ENCODE measurements at regions of chr11 and their contacts with region 1.

Region 1: DNA sequence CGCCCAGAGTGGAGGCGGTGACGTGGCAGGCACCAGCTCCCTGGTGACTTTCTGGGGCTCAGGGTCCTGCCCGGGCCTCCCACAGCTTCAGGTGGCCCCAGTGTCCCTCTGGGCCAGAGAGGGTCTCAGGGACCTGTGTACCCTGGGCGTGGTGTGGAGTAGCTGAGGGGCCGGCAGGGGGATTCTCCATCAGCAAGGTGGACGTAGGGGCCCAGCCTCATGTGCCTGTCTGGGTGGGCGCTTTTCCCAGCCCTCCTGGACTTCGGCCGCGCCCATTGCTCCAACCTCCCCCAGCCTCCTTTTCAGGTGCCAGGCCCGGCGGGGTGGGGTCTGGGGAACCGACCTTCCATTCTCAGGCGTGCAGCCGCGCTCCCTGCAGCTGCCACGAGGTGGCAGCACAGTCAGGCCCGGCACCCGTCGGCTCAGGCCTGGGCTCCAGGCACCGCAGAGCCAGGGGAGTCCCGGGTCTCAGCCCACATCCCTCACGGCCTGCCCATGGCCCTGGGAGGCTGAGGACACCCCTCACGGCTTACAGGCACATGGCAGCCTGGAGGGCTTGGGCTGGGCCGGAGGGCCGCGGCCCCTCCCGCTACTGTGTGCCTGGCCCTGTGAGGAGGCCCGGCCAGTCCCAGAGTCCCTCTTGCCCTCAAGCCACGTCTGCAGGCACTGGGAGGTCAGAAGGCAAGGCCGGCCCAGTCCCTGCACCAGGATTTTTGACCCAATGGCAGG is 19.9 kb upstream of the MUC5B start:
- DNase-seq: peak; percentile 72
- H3K4me3 ChIP-seq: no peak overlapping the region
- H3K27ac ChIP-seq: no peak overlapping the region
- H3K4me1 ChIP-seq: peaks cover 12% of the 10 kb centered on the region
- H3K27me3 ChIP-seq: peaks cover 13% of the 10 kb centered on the region
- CTCF ChIP-seq: peak; percentile 93

Region 2: GRCh38 chr11:1233331-1233715 is 30.4 kb after region 1 on chr11:
- intact Hi-C with region 1: loop called (anchors 1 kb)
- DNase-seq: peak; percentile 73
- H3K4me3 ChIP-seq: no peak overlapping the region
- H3K27ac ChIP-seq: peak overlapping the region; percentile 50
- H3K4me1 ChIP-seq: peaks cover 15% of the 10 kb centered on the region
- H3K27me3 ChIP-seq: no peaks in the 10 kb centered on the region
- CTCF ChIP-seq: peak; percentile 36

Region 3: DNA sequence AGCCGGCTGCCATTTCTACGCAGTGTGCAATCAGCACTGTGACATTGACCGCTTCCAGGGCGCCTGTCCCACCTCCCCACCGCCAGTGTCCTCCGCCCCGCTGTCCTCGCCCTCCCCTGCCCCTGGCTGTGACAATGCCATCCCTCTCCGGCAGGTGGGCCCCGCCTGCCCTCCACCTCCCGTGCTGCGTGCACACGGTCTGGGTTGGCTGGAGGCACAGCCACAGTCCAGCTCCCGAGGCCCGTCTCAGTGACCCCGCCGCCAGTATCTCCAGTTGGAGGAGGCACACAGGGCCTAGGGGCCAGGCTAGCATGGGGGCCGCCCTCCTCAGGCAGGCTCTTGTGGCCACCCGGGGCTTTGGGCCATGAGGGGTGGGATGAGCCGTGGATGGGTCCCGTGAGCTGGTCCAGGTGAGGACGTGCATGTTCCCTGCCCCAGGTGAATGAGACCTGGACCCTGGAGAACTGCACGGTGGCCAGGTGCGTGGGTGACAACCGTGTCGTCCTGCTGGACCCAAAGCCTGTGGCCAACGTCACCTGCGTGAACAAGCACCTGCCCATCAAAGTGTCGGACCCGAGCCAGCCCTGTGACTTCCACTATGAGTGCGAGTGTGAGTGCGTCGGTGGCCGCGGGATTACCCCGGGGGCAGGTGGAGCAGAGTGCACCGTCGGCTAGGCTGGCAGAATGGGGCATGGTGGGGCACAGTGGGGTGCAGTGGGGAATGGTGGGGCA is 49.6 kb after region 1 on chr11:
- intact Hi-C with region 1: no loop called
- DNase-seq: no peak
- H3K4me3 ChIP-seq: no peak overlapping the region
- H3K27ac ChIP-seq: no peak overlapping the region
- H3K4me1 ChIP-seq: no peaks in the 10 kb centered on the region
- H3K27me3 ChIP-seq: no peaks in the 10 kb centered on the region
- CTCF ChIP-seq: no peak